Transverse colon (tissue), 4 donors: ENCODE measurements at regions of chr6 and their contacts with region 1.

Region 1: DNA sequence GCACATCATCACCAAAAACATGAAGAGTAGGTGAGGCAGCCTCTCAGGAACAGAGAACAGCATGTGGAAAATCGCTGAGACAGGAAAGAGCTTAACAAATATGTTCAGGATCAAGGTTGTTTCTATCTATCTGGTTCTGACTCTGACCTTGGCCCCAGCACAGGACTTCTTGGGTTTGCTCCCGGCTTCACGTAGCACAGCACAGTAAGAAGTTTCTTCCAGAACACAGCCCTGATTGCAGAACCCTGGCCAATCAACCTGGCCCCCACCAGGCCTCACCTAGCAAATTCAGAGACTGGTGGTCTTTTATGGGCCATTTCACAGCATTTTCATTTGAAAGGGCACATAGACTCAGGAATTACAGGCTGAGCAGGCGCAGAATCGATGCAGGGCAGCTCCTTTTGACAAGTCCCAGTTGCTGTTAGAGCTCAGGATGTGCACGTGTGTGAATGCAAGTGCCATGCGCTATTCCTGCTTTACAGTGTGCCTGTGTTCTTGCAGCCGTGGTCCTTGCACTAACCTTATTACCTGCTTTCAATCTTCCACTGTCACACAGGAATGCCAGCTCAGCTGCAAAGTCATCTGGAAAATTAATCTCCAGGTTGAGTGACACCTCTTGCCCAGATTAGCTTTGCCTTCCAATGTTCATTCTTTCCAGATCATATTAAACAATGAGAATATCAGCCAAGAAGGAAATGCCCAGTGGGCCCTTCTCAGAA is 100.5 kb upstream of the SLC2A12 start:
- DNase-seq: no peak
- H3K4me3 ChIP-seq: no peak overlapping the region
- H3K27ac ChIP-seq: no peak overlapping the region
- H3K4me1 ChIP-seq: peaks cover 0 to 8% (median 3%) of the 10 kb centered on the region in 4 donors
- H3K27me3 ChIP-seq: no peaks in the 10 kb centered on the region
- CTCF ChIP-seq: no peak
- EP300 ChIP-seq: no peak
- POLR2A ChIP-seq: no peak

Region 2: DNA sequence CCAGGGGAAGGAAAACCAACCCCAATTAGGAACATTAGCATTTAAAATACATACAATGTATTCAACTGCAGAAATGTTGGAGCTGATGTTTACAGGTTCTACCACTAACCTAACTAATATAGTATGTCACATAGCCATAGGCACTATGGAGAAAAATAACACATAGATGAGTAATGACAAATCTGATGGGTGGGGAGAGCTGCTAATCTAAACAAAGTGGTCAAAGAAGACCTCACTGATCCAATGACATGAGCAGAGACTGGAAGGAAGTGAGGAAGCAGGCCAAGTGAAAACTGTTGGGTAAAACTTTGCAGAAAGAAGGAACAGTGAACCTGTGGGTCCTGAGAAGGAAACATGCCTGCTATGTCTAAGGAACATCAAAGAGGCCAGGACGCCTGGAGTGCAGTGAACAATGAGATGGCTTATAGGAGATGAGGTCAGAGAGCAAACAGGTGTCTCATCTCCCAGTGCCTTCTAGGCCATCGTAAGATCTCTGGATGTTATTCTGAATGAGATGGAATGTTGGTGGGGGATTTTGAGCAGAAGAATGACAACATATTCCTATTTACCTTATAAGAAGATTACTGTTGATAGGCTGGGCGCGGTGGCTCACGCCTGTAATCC is 661.3 kb after region 1 on chr6:
- in situ Hi-C with region 1: loop called in 1 of 4 experiments (anchors 10 kb)
- intact Hi-C with region 1: no loop called
- DNase-seq: no peak
- H3K4me3 ChIP-seq: no peak overlapping the region
- H3K27ac ChIP-seq: no peak overlapping the region
- H3K4me1 ChIP-seq: no peaks in the 10 kb centered on the region
- H3K27me3 ChIP-seq: no peaks in the 10 kb centered on the region
- CTCF ChIP-seq: no peak
- EP300 ChIP-seq: no peak
- POLR2A ChIP-seq: no peak

Region 3: DNA sequence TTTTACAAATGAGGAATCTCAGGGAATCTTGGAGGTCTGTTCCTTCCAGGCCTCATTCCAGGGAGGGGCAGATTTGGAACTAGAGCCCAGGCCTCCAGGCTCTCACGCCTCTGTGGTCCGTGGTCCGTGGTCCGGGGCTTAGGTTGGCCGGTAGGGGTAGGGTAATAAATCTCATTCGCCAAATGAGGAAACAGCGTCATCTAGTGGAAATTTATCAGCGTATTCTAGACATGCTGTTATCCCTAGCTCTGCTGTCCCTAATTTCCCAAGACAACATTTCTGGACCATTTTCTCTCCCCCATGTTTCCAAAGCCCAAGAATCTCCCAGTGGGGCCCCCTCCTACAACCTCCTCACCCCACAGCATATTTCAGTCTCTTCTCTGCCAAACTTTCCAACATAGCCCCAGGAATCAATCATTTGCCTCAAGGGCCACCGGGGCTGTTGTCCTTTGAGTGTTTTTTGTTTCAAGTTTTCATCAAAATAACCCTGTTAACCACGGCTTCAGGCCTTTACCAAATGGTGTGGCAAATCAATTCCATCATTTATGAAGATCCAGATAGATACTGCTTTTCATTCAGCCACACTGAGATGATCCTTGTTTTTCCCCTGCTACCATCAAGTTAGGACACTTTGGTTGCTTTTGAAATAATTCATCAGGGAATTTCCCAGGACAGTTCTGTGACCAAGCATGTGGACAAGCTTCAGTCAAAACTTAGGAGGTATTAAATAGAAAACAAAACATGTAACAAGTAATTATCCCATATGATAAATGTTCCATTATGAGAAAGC is 670.2 kb after region 1 on chr6:
- in situ Hi-C with region 1: loop called in 3 of 4 experiments (anchors 10 to 25 kb)
- intact Hi-C with region 1: no loop called
- DNase-seq: peak; percentile 32
- H3K4me3 ChIP-seq: no peak overlapping the region
- H3K27ac ChIP-seq: peak overlapping the region in 1 of 4 donors; percentile 0
- H3K4me1 ChIP-seq: peaks cover 0 to 10% (median 1%) of the 10 kb centered on the region in 4 donors
- H3K27me3 ChIP-seq: no peaks in the 10 kb centered on the region
- CTCF ChIP-seq: peak; percentile 70 to 96 (median 84)
- EP300 ChIP-seq: no peak
- POLR2A ChIP-seq: no peak

Region 4: DNA sequence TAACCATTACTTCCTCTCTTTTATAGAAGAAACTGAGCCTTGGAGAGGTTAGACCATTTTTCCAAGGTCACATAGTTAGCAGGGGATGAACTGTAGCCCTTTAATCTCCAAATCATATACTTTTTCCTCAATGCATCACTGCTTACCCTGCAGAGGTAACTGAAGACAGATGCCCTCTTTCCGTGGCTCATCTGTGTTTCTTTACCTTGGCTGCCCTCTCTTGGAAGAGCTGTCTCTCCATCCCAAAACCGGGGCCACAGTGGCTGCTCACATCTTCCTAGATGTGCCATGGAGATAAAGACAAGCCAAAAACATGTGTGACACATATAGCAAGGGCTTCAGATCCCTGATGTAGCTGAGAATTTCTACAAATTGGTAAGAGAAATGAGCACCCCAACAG is 797.6 kb after region 1 on chr6:
- in situ Hi-C with region 1: loop called in 1 of 4 experiments (anchors 25 kb)
- intact Hi-C with region 1: loop called (anchors 10 kb)
- DNase-seq: no peak
- H3K4me3 ChIP-seq: no peak overlapping the region
- H3K27ac ChIP-seq: no peak overlapping the region
- H3K4me1 ChIP-seq: no peaks in the 10 kb centered on the region
- H3K27me3 ChIP-seq: no peaks in the 10 kb centered on the region
- CTCF ChIP-seq: no peak
- EP300 ChIP-seq: no peak
- POLR2A ChIP-seq: no peak